ENCODE measurements at regions of chr4 and their contacts with region 1.

Region 1: GRCh38 chr4:110049951-110050925 is 137.6 kb downstream of the EGF start:
- DNase-seq: peak; percentile 16 to 56 (median 38)
- ATAC-seq: peak; percentile 76
- H3K4me3 ChIP-seq: no peak overlapping the region
- H3K4me3 Mint-ChIP-seq: no peak overlapping the region
- H3K27ac ChIP-seq: no peak overlapping the region
- H3K27ac Mint-ChIP-seq: peak overlapping the region in 1 of 9 donors; percentile 33
- H3K4me1 ChIP-seq: peaks cover 0 to 4% of the 10 kb centered on the region in 2 donors
- H3K4me1 Mint-ChIP-seq: peaks cover 0 to 34% (median 0%) of the 10 kb centered on the region in 7 donors
- H3K27me3 ChIP-seq: no peaks in the 10 kb centered on the region
- H3K27me3 Mint-ChIP-seq: no peaks in the 10 kb centered on the region

Region 2: DNA sequence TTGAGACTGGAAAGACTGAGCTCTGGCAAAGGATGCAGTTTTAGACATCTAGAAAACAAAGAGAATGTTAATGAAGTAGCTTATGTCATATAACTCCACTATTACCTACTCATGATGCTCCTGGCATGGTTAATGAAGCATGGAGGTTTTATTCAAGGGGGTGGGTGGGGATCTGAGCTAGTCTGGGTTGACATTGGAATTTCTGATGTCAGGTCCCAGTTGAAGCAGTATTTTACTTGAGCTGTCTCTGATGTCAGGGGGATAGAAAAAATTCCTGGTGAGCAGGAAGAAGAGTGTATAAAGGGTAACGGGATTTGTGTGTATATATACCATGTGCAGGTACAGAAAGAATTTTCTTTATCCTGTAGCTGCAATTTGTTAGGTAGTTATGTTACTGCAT is 46.2 kb after region 1 on chr4:
- CTCF ChIA-PET with region 1: no interaction called
- POLR2A ChIA-PET with region 1: no interaction called
- intact Hi-C with region 1: loop called in 1 of 2 experiments (anchors 5 kb)
- DNase-seq: no peak
- ATAC-seq: no peak
- H3K4me3 ChIP-seq: no peak overlapping the region
- H3K4me3 Mint-ChIP-seq: no peak overlapping the region
- H3K27ac ChIP-seq: no peak overlapping the region
- H3K27ac Mint-ChIP-seq: peak overlapping the region in 1 of 9 donors; percentile 51
- H3K4me1 ChIP-seq: no peaks in the 10 kb centered on the region
- H3K4me1 Mint-ChIP-seq: peaks cover 0 to 25% (median 0%) of the 10 kb centered on the region in 7 donors
- H3K27me3 ChIP-seq: no peaks in the 10 kb centered on the region
- H3K27me3 Mint-ChIP-seq: peaks cover 0 to 4% (median 0%) of the 10 kb centered on the region in 5 donors

Region 3: GRCh38 chr4:110119337-110119736 is 69.1 kb after region 1 on chr4:
- CTCF ChIA-PET with region 1: no interaction called
- POLR2A ChIA-PET with region 1: no interaction called
- intact Hi-C with region 1: loop called in 1 of 2 experiments (anchors 2 kb)
- DNase-seq: peak in 1 of 9 donors; percentile 1
- ATAC-seq: peak; percentile 38
- H3K4me3 ChIP-seq: no peak overlapping the region
- H3K4me3 Mint-ChIP-seq: no peak overlapping the region
- H3K27ac ChIP-seq: no peak overlapping the region
- H3K27ac Mint-ChIP-seq: peak overlapping the region in 1 of 9 donors; percentile 33
- H3K4me1 ChIP-seq: peaks cover 0 to 7% of the 10 kb centered on the region in 2 donors
- H3K4me1 Mint-ChIP-seq: peaks cover 2 to 28% (median 8%) of the 10 kb centered on the region in 7 donors
- H3K27me3 ChIP-seq: no peaks in the 10 kb centered on the region
- H3K27me3 Mint-ChIP-seq: no peaks in the 10 kb centered on the region

Region 4: GRCh38 chr4:110165382-110166285 is 115.4 kb after region 1 on chr4:
- CTCF ChIA-PET with region 1: interaction called, 4 read pairs
- POLR2A ChIA-PET with region 1: interaction called, 4 read pairs
- intact Hi-C with region 1: loop called in 1 of 2 experiments (anchors 1 kb)
- DNase-seq: peak; percentile 12 to 79 (median 69)
- ATAC-seq: peak; percentile 99
- H3K4me3 ChIP-seq: no peak overlapping the region
- H3K4me3 Mint-ChIP-seq: peak overlapping the region; percentile 42 to 82 (median 68)
- H3K27ac ChIP-seq: peak overlapping the region; percentile 56
- H3K27ac Mint-ChIP-seq: peak overlapping the region; percentile 87 to 98 (median 95)
- H3K4me1 ChIP-seq: peaks cover 13 to 22% of the 10 kb centered on the region in 2 donors
- H3K4me1 Mint-ChIP-seq: peaks cover 20 to 41% (median 38%) of the 10 kb centered on the region in 7 donors
- H3K27me3 ChIP-seq: no peaks in the 10 kb centered on the region
- H3K27me3 Mint-ChIP-seq: no peaks in the 10 kb centered on the region

Region 5: GRCh38 chr4:110211007-110211769 is 160.9 kb after region 1 on chr4:
- CTCF ChIA-PET with region 1: interaction called, 17 read pairs
- POLR2A ChIA-PET with region 1: no interaction called
- intact Hi-C with region 1: loop called (anchors 1 kb)
- DNase-seq: peak in 7 of 9 donors; percentile 15 to 59 (median 45)
- ATAC-seq: peak; percentile 78
- H3K4me3 ChIP-seq: no peak overlapping the region
- H3K4me3 Mint-ChIP-seq: peak overlapping the region in 2 of 10 donors; percentile 25 to 29
- H3K27ac ChIP-seq: no peak overlapping the region
- H3K27ac Mint-ChIP-seq: peak overlapping the region in 1 of 9 donors; percentile 25
- H3K4me1 ChIP-seq: no peaks in the 10 kb centered on the region
- H3K4me1 Mint-ChIP-seq: peaks cover 0 to 5% (median 0%) of the 10 kb centered on the region in 7 donors
- H3K27me3 ChIP-seq: no peaks in the 10 kb centered on the region
- H3K27me3 Mint-ChIP-seq: peaks cover 0 to 7% (median 0%) of the 10 kb centered on the region in 5 donors

Region 6: GRCh38 chr4:110510955-110511544 is 460.8 kb after region 1 on chr4:
- CTCF ChIA-PET with region 1: interaction called, 13 read pairs
- POLR2A ChIA-PET with region 1: no interaction called
- intact Hi-C with region 1: loop called (anchors 1 kb)
- DNase-seq: peak in 7 of 9 donors; percentile 12 to 61 (median 48)
- ATAC-seq: peak; percentile 85
- H3K4me3 ChIP-seq: no peak overlapping the region
- H3K4me3 Mint-ChIP-seq: no peak overlapping the region
- H3K27ac ChIP-seq: no peak overlapping the region
- H3K27ac Mint-ChIP-seq: no peak overlapping the region
- H3K4me1 ChIP-seq: peaks cover 0 to 5% of the 10 kb centered on the region in 2 donors
- H3K4me1 Mint-ChIP-seq: peaks cover 4 to 12% (median 10%) of the 10 kb centered on the region in 7 donors
- H3K27me3 ChIP-seq: no peaks in the 10 kb centered on the region
- H3K27me3 Mint-ChIP-seq: peaks cover 0 to 6% (median 0%) of the 10 kb centered on the region in 5 donors

Measured in naive thymus-derived CD4-positive, alpha-beta T cell (primary cell).